CD4-positive, alpha-beta T cell (primary cell): ENCODE measurements at regions of chr11 and their contacts with region 1.

Region 1: DNA sequence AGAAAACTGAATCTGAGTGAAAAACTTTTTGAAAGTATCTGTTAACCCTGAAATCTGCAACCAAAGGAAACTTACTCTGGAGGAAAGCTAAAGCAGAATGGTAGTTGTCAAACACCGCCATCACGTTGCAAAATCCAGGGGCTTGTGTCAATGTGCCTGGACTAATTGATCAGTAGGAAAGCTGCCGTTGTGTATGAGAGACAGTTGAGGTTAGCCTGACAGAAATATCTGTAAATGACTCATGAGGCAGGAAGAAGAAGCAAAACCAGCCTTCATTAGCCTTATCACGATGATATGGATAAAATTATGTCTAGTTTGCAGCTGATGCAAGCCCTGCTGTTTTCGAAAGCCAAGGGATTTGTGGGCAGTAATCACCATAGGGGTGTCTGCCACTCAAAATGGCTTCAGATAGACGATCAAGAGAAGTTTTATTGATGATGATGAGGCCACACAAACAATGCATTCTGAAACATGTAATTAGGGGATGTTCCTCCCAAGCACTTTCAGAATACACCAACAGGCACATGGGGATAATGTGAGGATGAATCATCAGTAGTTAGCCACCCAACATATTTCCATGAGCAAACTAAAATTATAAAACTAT is 8.9 kb downstream of the SCGB1A1 start:
- DNase-seq: peak in 3 of 14 experiments; percentile 22 to 56 (median 48)
- ATAC-seq: no peak
- H3K4me3 ChIP-seq: no peak overlapping the region
- H3K4me3 Mint-ChIP-seq: peak overlapping the region; percentile 38
- H3K27ac ChIP-seq: peak overlapping the region in 1 of 2 donors; percentile 24
- H3K27ac Mint-ChIP-seq: peak overlapping the region; percentile 35
- H3K4me1 ChIP-seq: peaks cover 34% of the 10 kb centered on the region
- H3K4me1 Mint-ChIP-seq: peaks cover 33% of the 10 kb centered on the region
- H3K27me3 ChIP-seq: no peaks in the 10 kb centered on the region
- H3K27me3 Mint-ChIP-seq: no peaks in the 10 kb centered on the region
- CTCF ChIP-seq: no peak

Region 2: DNA sequence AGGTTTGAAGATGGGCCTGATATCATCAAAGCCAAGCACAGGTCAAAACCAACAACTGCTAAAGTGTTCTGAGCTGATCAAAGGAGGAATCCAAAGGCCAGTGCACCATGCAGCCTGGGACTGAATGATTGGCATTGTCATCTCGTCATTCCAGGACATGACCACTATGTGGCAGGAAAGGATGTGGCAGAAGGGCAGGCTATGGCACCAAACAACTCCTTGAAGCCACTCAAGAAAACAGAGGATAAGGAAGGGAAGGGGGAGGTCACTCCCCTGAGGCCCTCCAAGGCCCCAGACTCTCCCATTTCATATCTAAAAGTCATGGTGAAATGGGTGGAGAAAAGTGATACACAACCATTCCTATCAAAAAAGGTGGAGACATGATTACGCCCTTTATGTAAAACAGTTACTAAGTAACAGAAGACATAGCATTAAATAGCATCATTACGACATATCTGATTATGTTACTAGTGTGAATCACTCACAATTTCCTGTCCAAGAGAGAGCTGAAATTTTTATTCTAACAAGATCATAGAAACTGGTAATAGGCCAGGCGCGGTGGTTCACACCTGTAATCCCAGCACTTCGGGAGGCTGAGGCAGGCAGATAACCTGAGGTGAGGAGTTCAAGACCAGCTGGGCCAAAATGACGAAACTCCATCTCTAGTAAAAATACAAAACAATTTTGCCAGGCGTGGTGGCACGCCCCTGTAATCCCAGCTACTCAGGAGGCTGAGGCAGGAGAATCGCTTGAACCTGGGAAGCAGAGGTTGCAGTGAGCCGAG is 69.6 kb after region 1 on chr11:
- CTCF ChIA-PET with region 1: interaction called, 10 read pairs
- POLR2A ChIA-PET with region 1: interaction called, 3 read pairs
- intact Hi-C with region 1: no loop called
- DNase-seq: peak in 4 of 14 experiments; percentile 31 to 56 (median 48)
- ATAC-seq: peak; percentile 59
- H3K4me3 ChIP-seq: no peak overlapping the region
- H3K4me3 Mint-ChIP-seq: no peak overlapping the region
- H3K27ac ChIP-seq: no peak overlapping the region
- H3K27ac Mint-ChIP-seq: no peak overlapping the region
- H3K4me1 ChIP-seq: peaks cover 3% of the 10 kb centered on the region
- H3K4me1 Mint-ChIP-seq: no peaks in the 10 kb centered on the region
- H3K27me3 ChIP-seq: no peaks in the 10 kb centered on the region
- H3K27me3 Mint-ChIP-seq: peaks cover 2% of the 10 kb centered on the region
- CTCF ChIP-seq: peak; percentile 26

Region 3: GRCh38 chr11:62542750-62543567 is 115.2 kb after region 1 on chr11:
- CTCF ChIA-PET with region 1: interaction called, 35 read pairs
- POLR2A ChIA-PET with region 1: interaction called, 15 read pairs
- intact Hi-C with region 1: loop called (anchors 2 to 5 kb)
- DNase-seq: peak; percentile 58 to 89 (median 66)
- ATAC-seq: peak; percentile 56
- H3K4me3 ChIP-seq: peak overlapping the region; percentile 97
- H3K4me3 Mint-ChIP-seq: peak overlapping the region; percentile 99
- H3K27ac ChIP-seq: peak overlapping the region; percentile 77 to 84
- H3K27ac Mint-ChIP-seq: peak overlapping the region; percentile 90
- H3K4me1 ChIP-seq: peaks cover 89% of the 10 kb centered on the region
- H3K4me1 Mint-ChIP-seq: peaks cover 77% of the 10 kb centered on the region
- H3K27me3 ChIP-seq: no peaks in the 10 kb centered on the region
- H3K27me3 Mint-ChIP-seq: no peaks in the 10 kb centered on the region
- CTCF ChIP-seq: peak; percentile 99

Region 4: GRCh38 chr11:62573592-62574362 is 146.0 kb after region 1 on chr11 and contains the start of gene EEF1G:
- CTCF ChIA-PET with region 1: interaction called, 14 read pairs
- POLR2A ChIA-PET with region 1: interaction called, 6 read pairs
- intact Hi-C with region 1: no loop called
- DNase-seq: peak; percentile 95 to 100 (median 97)
- ATAC-seq: peak; percentile 94
- H3K4me3 ChIP-seq: peak within 1 kb of the TSS; percentile 82
- H3K4me3 Mint-ChIP-seq: peak within 1 kb of the TSS; percentile 93
- H3K27ac ChIP-seq: peak within 1 kb of the TSS; percentile 76 to 83
- H3K27ac Mint-ChIP-seq: peak within 1 kb of the TSS; percentile 89
- H3K4me1 ChIP-seq: peaks cover 48% of the 10 kb centered on the region
- H3K4me1 Mint-ChIP-seq: peaks cover 55% of the 10 kb centered on the region
- H3K27me3 ChIP-seq: no peaks in the 10 kb centered on the region
- H3K27me3 Mint-ChIP-seq: no peaks in the 10 kb centered on the region
- CTCF ChIP-seq: no peak
- total RNA-seq, gene EEF1G: 2,181 to 2,269 TPM

Region 5: GRCh38 chr11:62860835-62861563 is 433.3 kb after region 1 on chr11:
- CTCF ChIA-PET with region 1: interaction called, 3 read pairs
- POLR2A ChIA-PET with region 1: no interaction called
- intact Hi-C with region 1: loop called (anchors 5 to 10 kb)
- DNase-seq: no peak
- ATAC-seq: no peak
- H3K4me3 ChIP-seq: no peak overlapping the region
- H3K4me3 Mint-ChIP-seq: no peak overlapping the region
- H3K27ac ChIP-seq: no peak overlapping the region
- H3K27ac Mint-ChIP-seq: no peak overlapping the region
- H3K4me1 ChIP-seq: peaks cover 18% of the 10 kb centered on the region
- H3K4me1 Mint-ChIP-seq: peaks cover 18% of the 10 kb centered on the region
- H3K27me3 ChIP-seq: no peaks in the 10 kb centered on the region
- H3K27me3 Mint-ChIP-seq: no peaks in the 10 kb centered on the region
- CTCF ChIP-seq: no peak